CD4-positive, alpha-beta memory T cell (primary cell): ENCODE measurements at regions of chr10 and their contacts with region 1.

Region 1: GRCh38 chr10:35447693-35448407 is 111.5 kb downstream of the CCNY start:
- DNase-seq: peak; percentile 56 to 76 (median 67)
- H3K4me3 ChIP-seq: no peak overlapping the region
- H3K4me3 Mint-ChIP-seq: peak overlapping the region; percentile 60 to 94 (median 78)
- H3K27ac ChIP-seq: peak overlapping the region; percentile 59
- H3K27ac Mint-ChIP-seq: peak overlapping the region; percentile 93 to 98 (median 97)
- H3K4me1 ChIP-seq: peaks cover 73% of the 10 kb centered on the region
- H3K4me1 Mint-ChIP-seq: peaks cover 61 to 82% (median 68%) of the 10 kb centered on the region in 4 donors
- H3K27me3 ChIP-seq: no peaks in the 10 kb centered on the region
- H3K27me3 Mint-ChIP-seq: no peaks in the 10 kb centered on the region

Region 2: DNA sequence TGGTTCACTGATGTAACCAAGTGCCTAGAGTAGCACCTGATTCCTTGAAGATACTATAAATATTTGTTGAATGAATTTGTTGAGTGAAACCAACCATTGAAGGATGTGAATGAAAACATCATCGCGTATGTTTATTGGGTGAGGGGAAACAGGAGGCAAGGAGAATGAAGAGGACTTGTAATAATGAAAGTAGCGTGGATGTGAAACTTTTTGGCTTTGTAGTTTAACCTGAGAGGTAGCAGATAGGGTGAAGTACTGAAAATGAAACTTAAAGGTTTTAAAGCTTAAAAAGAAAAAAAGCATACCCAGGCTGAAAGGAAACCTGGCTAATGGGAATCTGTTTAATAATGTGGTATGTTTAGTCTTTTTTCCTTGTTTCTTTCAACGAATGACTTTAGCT is 106.3 kb before region 1 on chr10:
- CTCF ChIA-PET with region 1: no interaction called
- POLR2A ChIA-PET with region 1: interaction called, 3 read pairs
- intact Hi-C with region 1: loop called (anchors 1 kb)
- DNase-seq: peak in 4 of 5 donors; percentile 25 to 63 (median 48)
- H3K4me3 ChIP-seq: no peak overlapping the region
- H3K4me3 Mint-ChIP-seq: peak overlapping the region in 7 of 8 donors; percentile 8 to 85 (median 68)
- H3K27ac ChIP-seq: peak overlapping the region; percentile 7
- H3K27ac Mint-ChIP-seq: peak overlapping the region in 6 of 7 donors; percentile 15 to 88 (median 38)
- H3K4me1 ChIP-seq: peaks cover 68% of the 10 kb centered on the region
- H3K4me1 Mint-ChIP-seq: peaks cover 52 to 80% (median 65%) of the 10 kb centered on the region in 4 donors
- H3K27me3 ChIP-seq: no peaks in the 10 kb centered on the region
- H3K27me3 Mint-ChIP-seq: no peaks in the 10 kb centered on the region

Region 3: GRCh38 chr10:35379226-35380137 is 68.4 kb before region 1 on chr10:
- CTCF ChIA-PET with region 1: no interaction called
- POLR2A ChIA-PET with region 1: no interaction called
- intact Hi-C with region 1: no loop called
- DNase-seq: no peak
- H3K4me3 ChIP-seq: no peak overlapping the region
- H3K4me3 Mint-ChIP-seq: peak overlapping the region in 4 of 8 donors; percentile 9 to 45 (median 33)
- H3K27ac ChIP-seq: no peak overlapping the region
- H3K27ac Mint-ChIP-seq: peak overlapping the region in 6 of 7 donors; percentile 10 to 85 (median 65)
- H3K4me1 ChIP-seq: peaks cover 39% of the 10 kb centered on the region
- H3K4me1 Mint-ChIP-seq: peaks cover 61 to 91% (median 74%) of the 10 kb centered on the region in 4 donors
- H3K27me3 ChIP-seq: no peaks in the 10 kb centered on the region
- H3K27me3 Mint-ChIP-seq: no peaks in the 10 kb centered on the region

Region 4: DNA sequence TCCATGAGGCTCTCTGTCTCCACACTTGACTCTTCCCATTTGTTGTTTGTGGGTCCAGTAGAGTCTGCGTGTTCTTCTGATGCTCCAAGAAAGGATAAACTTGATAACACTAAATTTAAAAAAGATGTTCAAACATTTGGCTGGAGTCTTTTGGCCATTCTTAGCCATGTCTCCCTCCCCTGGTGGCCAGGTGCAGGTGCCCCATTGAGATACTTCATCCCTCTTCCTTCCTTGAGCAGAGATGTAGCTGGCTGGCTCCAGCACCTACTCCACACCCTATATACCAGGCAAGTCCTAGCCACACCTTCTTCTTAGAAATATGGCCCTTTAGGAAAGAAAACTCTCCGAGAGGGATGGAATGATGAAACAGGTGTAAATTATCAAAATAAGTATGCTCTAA is 54.1 kb after region 1 on chr10:
- CTCF ChIA-PET with region 1: no interaction called
- POLR2A ChIA-PET with region 1: no interaction called
- intact Hi-C with region 1: loop called (anchors 10 kb)
- DNase-seq: no peak
- H3K4me3 ChIP-seq: no peak overlapping the region
- H3K4me3 Mint-ChIP-seq: no peak overlapping the region
- H3K27ac ChIP-seq: no peak overlapping the region
- H3K27ac Mint-ChIP-seq: no peak overlapping the region
- H3K4me1 ChIP-seq: no peaks in the 10 kb centered on the region
- H3K4me1 Mint-ChIP-seq: peaks cover 12 to 69% (median 38%) of the 10 kb centered on the region in 4 donors
- H3K27me3 ChIP-seq: no peaks in the 10 kb centered on the region
- H3K27me3 Mint-ChIP-seq: no peaks in the 10 kb centered on the region